Activated naive CD4-positive, alpha-beta T cell treated with anti-CD3 and anti-CD28 coated beads for 36 hours (primary cell): ENCODE measurements at regions of chr7 and their contacts with region 1.

Region 1: DNA sequence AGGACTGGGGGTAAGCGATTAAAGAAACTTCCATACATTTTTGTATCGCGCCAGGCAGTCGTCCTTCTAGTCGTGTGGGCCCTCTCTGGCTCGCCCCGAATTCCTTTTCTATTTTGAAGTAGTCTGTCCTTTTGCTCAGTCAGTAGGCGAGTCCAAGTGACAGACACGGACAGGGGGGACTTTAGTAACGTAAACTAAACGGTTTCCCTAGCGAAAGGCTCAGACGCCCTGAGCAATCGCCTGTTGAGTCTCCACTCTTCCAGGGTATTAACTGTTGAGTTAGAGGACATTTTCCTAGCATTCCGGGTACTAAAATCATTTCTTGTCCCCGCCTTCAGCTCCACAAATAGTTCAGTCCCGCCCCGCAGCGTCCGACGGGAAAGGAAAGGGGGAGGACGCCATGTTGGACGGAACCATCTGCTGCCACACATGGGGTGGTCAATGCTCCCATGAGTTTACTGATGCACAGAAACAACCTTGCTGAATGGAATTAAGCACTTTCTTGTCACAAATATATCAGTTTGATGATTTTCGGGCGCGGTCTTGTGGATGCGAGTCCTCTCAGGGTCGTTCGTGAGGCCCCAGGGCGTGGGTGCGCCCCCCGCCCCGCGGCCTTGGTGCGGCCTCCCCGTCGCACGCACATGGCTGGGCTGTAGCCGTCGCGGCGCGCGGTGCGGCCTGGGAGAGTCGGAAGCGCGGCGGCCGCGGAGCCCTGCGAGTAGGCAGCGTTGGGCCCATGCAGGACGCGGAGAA is at the start of gene EIF3B:
- DNase-seq: peak; percentile 94
- H3K4me3 Mint-ChIP-seq: peak within 1 kb of the TSS; percentile 87
- H3K27ac Mint-ChIP-seq: peak within 1 kb of the TSS; percentile 99
- H3K4me1 Mint-ChIP-seq: peaks cover 33% of the 10 kb centered on the region
- H3K27me3 Mint-ChIP-seq: no peaks in the 10 kb centered on the region
- total RNA-seq, gene EIF3B: 156 to 159 TPM

Region 2: DNA sequence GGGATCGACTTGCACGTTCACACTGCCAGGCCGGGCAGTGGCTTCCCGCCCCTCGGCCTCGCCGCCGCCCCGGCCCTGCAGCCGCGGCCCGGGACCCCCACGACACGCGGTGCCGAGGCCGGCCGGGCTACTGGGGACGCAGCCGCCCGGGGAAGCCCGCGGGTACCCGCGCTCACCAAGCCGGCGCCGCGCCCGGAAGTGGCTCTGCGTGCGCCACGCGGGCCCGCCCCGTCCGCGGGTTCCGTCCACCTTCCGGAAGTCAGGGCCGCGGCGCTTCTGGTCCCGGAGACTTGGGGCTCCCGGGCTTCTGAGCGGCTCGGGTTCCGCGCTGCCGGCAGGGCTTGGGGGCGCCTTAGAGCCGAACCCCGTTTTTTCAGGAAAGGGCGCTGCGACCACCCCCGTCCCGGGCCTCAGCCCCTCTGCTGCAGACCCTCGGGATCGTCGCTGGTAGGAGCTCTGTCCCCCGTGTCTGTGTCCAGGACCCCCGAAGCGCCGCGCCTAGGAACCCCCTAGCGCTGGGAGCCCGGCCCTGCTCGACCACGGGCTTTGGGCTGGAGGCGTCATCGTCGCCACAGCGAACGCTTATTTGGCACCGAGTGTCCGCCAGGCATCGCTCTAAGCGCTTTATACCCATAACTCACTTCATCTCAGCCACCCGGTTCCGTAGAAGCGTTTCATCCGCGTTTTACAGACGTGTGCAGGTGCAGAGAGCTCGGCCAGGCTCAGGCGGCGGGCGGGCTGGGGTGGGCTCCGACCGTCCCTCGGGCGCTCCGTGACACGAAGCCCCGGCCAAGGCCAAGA is 784.3 kb before region 1 on chr7 and contains the start of gene PSMG3:
- CTCF ChIA-PET with region 1: no interaction called
- intact Hi-C with region 1: loop called (anchors 2 kb)
- DNase-seq: peak; percentile 91
- H3K4me3 Mint-ChIP-seq: peak within 1 kb of the TSS; percentile 87
- H3K27ac Mint-ChIP-seq: peak within 1 kb of the TSS; percentile 87
- H3K4me1 Mint-ChIP-seq: peaks cover 37% of the 10 kb centered on the region
- H3K27me3 Mint-ChIP-seq: no peaks in the 10 kb centered on the region
- total RNA-seq, gene PSMG3: 29.8 to 33.9 TPM

Region 3: DNA sequence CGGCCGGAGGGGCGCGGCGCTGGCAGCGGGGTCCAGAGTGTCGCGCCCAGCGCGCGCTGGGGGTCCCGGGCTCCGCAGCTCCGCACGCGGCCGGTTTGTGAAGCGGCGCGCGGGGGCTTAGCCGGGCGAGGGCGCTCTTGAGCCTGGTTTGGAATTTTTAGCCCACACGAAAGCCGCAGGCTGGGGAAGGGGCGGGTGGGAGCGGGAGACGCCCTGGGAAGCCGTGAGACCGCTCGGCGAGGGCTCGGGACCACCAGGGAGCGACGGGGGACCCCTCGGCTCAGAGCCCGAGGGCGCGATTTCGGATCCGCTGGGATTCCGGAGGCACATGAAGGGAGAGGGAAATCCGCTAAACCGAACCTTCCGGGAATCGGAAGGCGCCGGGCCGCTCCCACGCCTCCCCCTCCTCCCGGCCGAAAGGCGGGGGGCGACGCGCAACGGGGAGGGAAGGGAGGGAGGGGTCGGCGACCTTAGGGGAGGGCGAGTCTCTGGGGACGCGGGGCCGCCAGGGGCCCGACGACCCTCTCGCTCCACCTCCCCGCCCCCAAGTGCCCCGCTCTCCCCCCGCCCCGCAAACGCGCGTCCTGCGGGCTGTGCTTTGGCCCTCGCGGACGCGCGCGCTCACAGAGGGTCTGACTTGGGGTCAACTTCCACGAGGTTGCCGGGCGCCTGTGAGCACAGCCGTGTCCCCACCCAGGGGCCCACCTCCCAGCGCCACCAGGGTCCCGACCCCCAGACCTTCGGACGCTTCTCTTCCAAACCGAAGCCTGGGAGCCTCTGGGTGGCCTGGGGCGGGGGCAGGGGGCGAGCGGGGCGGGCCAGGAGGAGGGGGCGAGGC is 689.4 kb before region 1 on chr7:
- CTCF ChIA-PET with region 1: no interaction called
- intact Hi-C with region 1: loop called (anchors 2 kb)
- DNase-seq: peak; percentile 74
- H3K4me3 Mint-ChIP-seq: peak overlapping the region; percentile 15
- H3K27ac Mint-ChIP-seq: no peak overlapping the region
- H3K4me1 Mint-ChIP-seq: peaks cover 13% of the 10 kb centered on the region
- H3K27me3 Mint-ChIP-seq: peaks cover 44% of the 10 kb centered on the region

Region 4: DNA sequence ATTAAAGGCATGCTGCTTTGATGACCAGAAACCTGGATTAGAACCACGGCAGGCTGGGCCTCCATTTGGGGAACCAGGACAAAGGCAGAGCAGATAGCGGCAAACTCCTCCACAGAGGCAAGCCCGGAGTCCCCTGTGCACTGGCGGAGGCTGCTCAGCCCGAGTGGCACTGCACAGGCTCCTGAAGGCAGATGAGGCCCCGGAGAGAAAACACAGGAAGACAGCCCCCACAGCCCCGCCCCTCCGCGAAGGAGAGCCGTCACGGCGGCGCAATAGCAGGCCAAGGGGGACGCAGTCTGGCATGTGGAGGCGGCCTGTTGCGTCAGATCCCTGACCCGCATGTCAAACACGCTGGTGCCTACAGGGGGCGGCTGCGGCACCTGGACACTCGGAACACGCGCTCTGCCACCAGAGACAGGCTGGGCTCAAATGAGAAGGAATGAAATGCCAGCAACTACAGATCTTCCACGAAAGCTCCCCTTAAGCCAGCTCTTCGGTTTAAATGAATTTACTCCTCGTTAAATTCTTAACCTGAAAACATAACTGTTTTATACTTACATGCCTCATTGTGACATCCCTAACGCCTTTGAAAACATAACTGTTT is 250.2 kb before region 1 on chr7:
- CTCF ChIA-PET with region 1: no interaction called
- intact Hi-C with region 1: loop called (anchors 5 kb)
- DNase-seq: peak; percentile 88
- H3K4me3 Mint-ChIP-seq: peak overlapping the region; percentile 56
- H3K27ac Mint-ChIP-seq: peak overlapping the region; percentile 74
- H3K4me1 Mint-ChIP-seq: peaks cover 39% of the 10 kb centered on the region
- H3K27me3 Mint-ChIP-seq: no peaks in the 10 kb centered on the region

Region 5: DNA sequence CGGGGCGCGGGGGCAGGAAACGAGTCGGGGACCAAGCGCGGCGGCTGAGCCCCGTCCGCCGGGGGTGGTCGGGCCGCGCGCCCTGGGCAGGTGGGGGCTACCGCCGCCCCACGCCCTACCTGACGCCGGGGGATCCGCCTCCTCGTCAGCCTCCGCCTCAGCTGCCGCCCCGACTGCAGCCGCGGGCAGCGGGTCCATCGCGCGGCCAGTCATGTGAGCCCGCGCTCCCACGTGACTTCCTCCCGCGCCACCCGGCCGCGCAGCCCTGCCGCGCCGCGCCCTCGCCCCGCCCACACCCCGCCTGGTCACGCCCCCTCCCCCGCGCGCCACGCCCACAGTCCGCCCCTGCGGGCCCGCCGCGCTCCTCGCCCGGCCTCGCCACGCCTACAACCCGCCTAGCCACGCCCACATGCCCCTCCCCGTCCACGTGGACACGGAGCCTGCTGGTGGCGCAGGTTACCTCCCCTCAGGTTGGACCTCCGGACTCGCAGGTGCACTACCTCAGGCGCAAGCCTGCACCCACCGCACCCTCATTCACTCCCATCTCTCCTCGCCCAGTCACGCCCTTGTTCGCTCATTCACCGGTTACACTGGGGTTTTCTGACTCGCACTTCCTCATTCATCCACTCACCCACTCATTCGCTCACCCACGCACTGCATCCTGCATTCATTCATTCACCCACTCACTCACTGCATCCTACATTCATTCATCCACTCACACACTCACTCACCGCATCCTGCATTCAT is 40.0 kb before region 1 on chr7 and contains the start of gene SNX8:
- CTCF ChIA-PET with region 1: no interaction called
- intact Hi-C with region 1: loop called (anchors 1 kb)
- DNase-seq: peak; percentile 95
- H3K4me3 Mint-ChIP-seq: peak within 1 kb of the TSS; percentile 88
- H3K27ac Mint-ChIP-seq: no peak within 1 kb of the TSS
- H3K4me1 Mint-ChIP-seq: peaks cover 13% of the 10 kb centered on the region
- H3K27me3 Mint-ChIP-seq: no peaks in the 10 kb centered on the region
- total RNA-seq, gene SNX8: 28.7 to 29.6 TPM

Region 6: DNA sequence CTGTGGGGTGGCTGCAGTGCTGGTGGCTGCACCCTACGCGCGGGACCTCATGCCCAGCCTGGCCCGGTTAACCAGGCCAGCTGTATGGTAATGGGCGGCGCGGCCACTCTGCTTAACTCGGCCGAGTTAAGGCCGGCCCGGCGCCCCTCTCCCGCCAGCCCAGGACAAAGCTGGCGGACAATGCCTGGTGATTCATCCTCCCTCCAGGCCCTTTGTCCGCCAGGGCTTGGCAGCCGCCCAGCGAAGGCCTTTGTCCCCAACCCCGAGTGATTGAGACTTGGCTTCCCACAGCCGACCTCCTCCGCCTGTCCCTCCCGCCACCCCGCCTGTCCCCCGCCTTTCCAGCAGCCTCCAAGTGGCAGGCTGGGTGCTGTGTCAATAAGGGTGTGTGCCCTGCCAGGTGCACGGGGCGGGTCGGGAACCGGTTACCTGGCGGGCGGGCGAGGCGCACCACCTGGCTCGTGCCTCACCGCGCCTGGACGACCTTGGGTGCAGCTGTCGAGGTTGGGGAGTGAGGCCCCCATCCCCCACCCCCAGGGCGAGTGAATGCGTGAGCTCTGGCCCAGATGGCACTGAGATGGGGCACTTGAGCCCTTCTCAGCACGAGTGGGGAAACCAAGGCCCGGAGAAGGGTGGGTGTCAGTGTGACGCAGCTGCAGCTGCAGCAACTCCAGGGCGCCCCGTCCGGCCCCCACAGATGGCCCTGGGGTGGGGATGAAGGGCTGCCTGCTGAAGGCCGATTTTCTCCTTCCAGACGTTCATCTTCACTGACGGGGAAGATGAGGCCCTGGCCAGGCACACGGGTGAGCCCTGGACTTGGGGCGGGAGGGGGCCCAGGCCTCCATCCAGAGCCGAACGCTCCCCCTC is 169.8 kb after region 1 on chr7:
- CTCF ChIA-PET with region 1: no interaction called
- intact Hi-C with region 1: loop called (anchors 5 kb)
- DNase-seq: no peak
- H3K4me3 Mint-ChIP-seq: no peak overlapping the region
- H3K27ac Mint-ChIP-seq: no peak overlapping the region
- H3K4me1 Mint-ChIP-seq: peaks cover 58% of the 10 kb centered on the region
- H3K27me3 Mint-ChIP-seq: no peaks in the 10 kb centered on the region